Vagina (tissue), 2 donors: ENCODE measurements at regions of chr17 and their contacts with region 1.

Region 1: DNA sequence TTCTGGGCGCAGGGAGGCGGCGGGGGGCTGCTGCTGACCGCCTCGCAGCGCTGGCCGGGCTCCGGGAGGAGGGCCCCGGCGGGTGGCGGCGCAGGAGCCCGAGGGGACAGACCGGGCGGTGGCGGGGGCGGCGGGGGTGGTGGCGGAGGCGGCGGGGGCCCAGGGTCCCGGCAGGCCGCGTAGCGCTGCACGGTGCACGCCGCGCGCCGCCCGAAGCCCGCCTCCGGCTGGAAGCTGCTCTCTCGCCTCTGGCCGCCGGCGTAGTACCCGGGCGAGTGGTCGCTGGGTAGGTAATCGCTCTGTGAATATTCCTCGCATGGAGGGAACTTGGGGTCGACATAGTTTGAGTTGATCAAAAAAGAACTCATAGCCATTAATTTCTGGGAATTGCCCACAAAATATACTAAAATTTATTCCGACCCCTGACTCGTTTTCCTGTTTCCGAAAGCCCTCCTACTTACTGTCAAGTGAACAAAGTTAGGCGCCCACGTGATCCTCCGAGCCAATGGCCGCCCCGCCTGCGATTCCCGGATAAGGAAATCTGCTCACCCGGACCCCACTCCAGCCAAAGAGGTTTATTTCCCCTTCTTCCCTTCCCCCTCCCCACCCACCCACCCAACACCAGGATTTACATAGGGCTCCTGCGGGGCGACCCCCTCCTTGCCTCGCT is at the start of gene HOXB4:
- DNase-seq: no peak
- H3K4me3 ChIP-seq: peak within 1 kb of the TSS; percentile 50 to 52
- H3K27ac ChIP-seq: peak within 1 kb of the TSS; percentile 75
- H3K4me1 ChIP-seq: peaks cover 44% of the 10 kb centered on the region
- H3K27me3 ChIP-seq: no peaks in the 10 kb centered on the region
- CTCF ChIP-seq: no peak
- POLR2A ChIP-seq: no peak
- total RNA-seq, gene HOXB4: 1.5 TPM

Region 2: GRCh38 chr17:48441231-48441711 is 136.8 kb before region 1 on chr17:
- intact Hi-C with region 1: no loop called
- DNase-seq: no peak
- H3K4me3 ChIP-seq: no peak overlapping the region
- H3K27ac ChIP-seq: no peak overlapping the region
- H3K4me1 ChIP-seq: no peaks in the 10 kb centered on the region
- H3K27me3 ChIP-seq: no peaks in the 10 kb centered on the region
- CTCF ChIP-seq: no peak
- POLR2A ChIP-seq: no peak

Region 3: GRCh38 chr17:48543107-48543853 is 34.8 kb before region 1 on chr17:
- intact Hi-C with region 1: loop called (anchors 2 kb)
- DNase-seq: no peak
- H3K4me3 ChIP-seq: peak overlapping the region; percentile 65 to 71
- H3K27ac ChIP-seq: peak overlapping the region; percentile 95
- H3K4me1 ChIP-seq: peaks cover 47% of the 10 kb centered on the region
- H3K27me3 ChIP-seq: no peaks in the 10 kb centered on the region
- CTCF ChIP-seq: peak in 1 of 3 experiments; percentile 21
- POLR2A ChIP-seq: no peak

Region 4: GRCh38 chr17:48769009-48769675 is 191.1 kb after region 1 on chr17:
- intact Hi-C with region 1: no loop called
- DNase-seq: no peak
- H3K4me3 ChIP-seq: no peak overlapping the region
- H3K27ac ChIP-seq: no peak overlapping the region
- H3K4me1 ChIP-seq: no peaks in the 10 kb centered on the region
- H3K27me3 ChIP-seq: no peaks in the 10 kb centered on the region
- CTCF ChIP-seq: no peak
- POLR2A ChIP-seq: no peak